ENCODE measurements at regions of chr3 and their contacts with region 1.

Region 1: GRCh38 chr3:25664810-25665314 is at the start of gene TOP2B:
- DNase-seq: peak; percentile 96 to 98 (median 96)
- ATAC-seq: peak; percentile 98
- H3K4me3 ChIP-seq: peak within 1 kb of the TSS; percentile 62 to 65
- H3K27ac ChIP-seq: peak within 1 kb of the TSS; percentile 97
- H3K4me1 ChIP-seq: peaks cover 16 to 44% of the 10 kb centered on the region in 2 donors
- H3K27me3 ChIP-seq: no peaks in the 10 kb centered on the region
- CTCF ChIP-seq: no peak
- polyA plus RNA-seq, gene TOP2B: 247 to 310 (median 280) TPM

Region 2: GRCh38 chr3:25789596-25790556 is 125.0 kb after region 1 on chr3 and contains the start of gene OXSM:
- intact Hi-C with region 1: loop called in 1 of 2 experiments (anchors 10 kb)
- DNase-seq: peak; percentile 88 to 96 (median 94)
- ATAC-seq: peak; percentile 98
- H3K4me3 ChIP-seq: peak within 1 kb of the TSS; percentile 57 to 68
- H3K27ac ChIP-seq: peak within 1 kb of the TSS; percentile 85 to 89
- H3K4me1 ChIP-seq: peaks cover 14 to 37% of the 10 kb centered on the region in 2 donors
- H3K27me3 ChIP-seq: no peaks in the 10 kb centered on the region
- CTCF ChIP-seq: no peak
- polyA plus RNA-seq, gene OXSM: 16.1 to 22.9 (median 20.0) TPM